ENCODE measurements at regions of chr16 and their contacts with region 1.

Region 1: DNA sequence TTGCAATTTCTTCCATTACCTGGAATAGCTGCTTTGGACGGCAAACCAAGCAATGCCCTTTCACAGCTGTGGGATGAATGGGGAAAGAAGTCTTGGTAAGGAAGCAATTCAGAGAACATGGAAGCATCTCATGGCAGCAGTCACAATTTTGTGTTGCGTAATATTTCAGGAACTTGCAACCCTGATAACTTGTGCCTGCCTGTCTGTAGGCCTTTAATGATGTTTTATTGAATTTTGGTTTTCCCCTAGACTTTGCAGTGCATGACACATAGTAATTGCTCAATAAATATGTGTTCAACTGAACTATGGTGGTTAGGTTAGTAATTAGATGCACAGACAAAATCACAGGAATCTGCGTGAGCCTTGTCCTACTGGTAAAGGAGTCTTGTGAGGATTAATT is 439.5 kb downstream of the WWOX start:
- DNase-seq: no peak
- ATAC-seq: no peak
- H3K4me3 Mint-ChIP-seq: no peak overlapping the region
- H3K27ac Mint-ChIP-seq: no peak overlapping the region
- H3K4me1 Mint-ChIP-seq: no peaks in the 10 kb centered on the region
- H3K27me3 Mint-ChIP-seq: no peaks in the 10 kb centered on the region
- CTCF ChIP-seq: no peak

Region 2: GRCh38 chr16:78522327-78522726 is 16.6 kb before region 1 on chr16:
- CTCF ChIA-PET with region 1: no interaction called
- POLR2A ChIA-PET with region 1: interaction called, 12 read pairs
- intact Hi-C with region 1: no loop called
- DNase-seq: no peak
- ATAC-seq: no peak
- H3K4me3 Mint-ChIP-seq: no peak overlapping the region
- H3K27ac Mint-ChIP-seq: no peak overlapping the region
- H3K4me1 Mint-ChIP-seq: peaks cover 11% of the 10 kb centered on the region
- H3K27me3 Mint-ChIP-seq: no peaks in the 10 kb centered on the region
- CTCF ChIP-seq: no peak

Region 3: GRCh38 chr16:78851266-78851665 is 312.3 kb after region 1 on chr16:
- CTCF ChIA-PET with region 1: no interaction called
- POLR2A ChIA-PET with region 1: no interaction called
- intact Hi-C with region 1: no loop called
- DNase-seq: no peak
- ATAC-seq: no peak
- H3K4me3 Mint-ChIP-seq: no peak overlapping the region
- H3K27ac Mint-ChIP-seq: no peak overlapping the region
- H3K4me1 Mint-ChIP-seq: no peaks in the 10 kb centered on the region
- H3K27me3 Mint-ChIP-seq: no peaks in the 10 kb centered on the region
- CTCF ChIP-seq: no peak

Measured in activated B cell treated with CpG ODN at 0.5 μM for 24 hours (primary cell).